ENCODE measurements at regions of chr1 and their contacts with region 1.

Region 1: GRCh38 chr1:235513495-235514366 is 9.5 kb upstream of the B3GALNT2 start:
- DNase-seq: peak; percentile 67
- H3K4me3 ChIP-seq: no peak overlapping the region
- H3K27ac ChIP-seq: peak overlapping the region in 1 of 2 donors; percentile 21
- H3K4me1 ChIP-seq: no peaks in the 10 kb centered on the region
- H3K27me3 ChIP-seq: no peaks in the 10 kb centered on the region
- CTCF ChIP-seq: peak; percentile 84 to 92 (median 86)
- POLR2A ChIP-seq: no peak

Region 2: GRCh38 chr1:235784950-235785349 is 271.2 kb after region 1 on chr1:
- intact Hi-C with region 1: loop called (anchors 5 kb)
- DNase-seq: no peak
- H3K4me3 ChIP-seq: no peak overlapping the region
- H3K27ac ChIP-seq: no peak overlapping the region
- H3K4me1 ChIP-seq: no peaks in the 10 kb centered on the region
- H3K27me3 ChIP-seq: no peaks in the 10 kb centered on the region
- CTCF ChIP-seq: no peak
- POLR2A ChIP-seq: no peak

Region 3: DNA sequence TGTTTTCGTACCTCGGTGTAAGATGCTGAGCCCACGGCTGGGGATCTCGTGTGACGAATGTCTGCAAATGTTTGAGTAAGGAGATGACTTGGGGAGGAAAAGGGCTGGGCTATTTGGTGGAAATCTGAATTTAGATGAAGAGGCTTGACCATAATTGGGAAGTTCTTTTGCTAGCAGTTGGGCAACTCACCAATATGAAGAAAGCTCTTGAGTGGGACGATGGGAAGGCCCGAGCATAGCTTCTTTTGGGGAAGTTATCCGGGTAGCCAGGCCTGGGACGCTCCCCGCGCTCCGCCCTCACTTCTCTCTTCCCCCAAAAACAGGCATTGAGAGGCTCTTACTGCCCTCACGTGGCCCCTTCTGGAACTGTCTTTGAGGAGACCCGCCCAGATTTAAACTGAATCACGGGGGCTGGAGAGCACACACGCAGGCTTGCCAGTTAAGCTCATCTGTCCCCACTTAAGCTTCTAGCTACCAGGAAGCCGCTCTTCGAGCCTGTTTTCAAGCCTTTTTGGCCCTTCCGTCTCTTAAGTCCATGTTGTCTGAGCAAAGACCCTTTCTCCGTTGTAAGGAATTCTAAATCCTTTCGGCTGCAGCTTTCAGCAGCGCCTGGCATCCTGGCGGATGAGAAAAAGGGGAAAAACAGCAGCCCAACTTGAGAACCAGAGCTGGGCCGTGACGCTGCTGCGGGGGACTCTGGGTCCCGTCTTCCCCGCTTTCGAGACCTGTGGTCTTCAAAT is 458.0 kb after region 1 on chr1:
- intact Hi-C with region 1: loop called (anchors 5 kb)
- DNase-seq: peak; percentile 82
- H3K4me3 ChIP-seq: peak overlapping the region; percentile 19 to 20
- H3K27ac ChIP-seq: peak overlapping the region; percentile 81 to 82
- H3K4me1 ChIP-seq: no peaks in the 10 kb centered on the region
- H3K27me3 ChIP-seq: no peaks in the 10 kb centered on the region
- CTCF ChIP-seq: peak; percentile 55 to 87 (median 83)
- POLR2A ChIP-seq: peak; percentile 37

Measured in prostate gland (tissue), 2 donors.